ENCODE measurements at regions of chr21 and their contacts with region 1.

Region 1: GRCh38 chr21:35932232-35932911 is 128.0 kb downstream of the SETD4 start:
- DNase-seq: peak; percentile 91
- H3K4me3 ChIP-seq: peak overlapping the region; percentile 51
- H3K27ac ChIP-seq: peak overlapping the region; percentile 63
- H3K4me1 ChIP-seq: peaks cover 24% of the 10 kb centered on the region
- H3K27me3 ChIP-seq: no peaks in the 10 kb centered on the region

Region 2: GRCh38 chr21:34745557-34746255 is 1186.7 kb before region 1 on chr21:
- in situ Hi-C with region 1: loop called (anchors 25 kb)
- DNase-seq: peak; percentile 90
- H3K4me3 ChIP-seq: peak overlapping the region; percentile 36
- H3K27ac ChIP-seq: 0 out of 2 replicates have a peak overlapping the region, but pooled peaks have one; percentile 15
- H3K4me1 ChIP-seq: peaks cover 17% of the 10 kb centered on the region
- H3K27me3 ChIP-seq: no peaks in the 10 kb centered on the region

Region 3: DNA sequence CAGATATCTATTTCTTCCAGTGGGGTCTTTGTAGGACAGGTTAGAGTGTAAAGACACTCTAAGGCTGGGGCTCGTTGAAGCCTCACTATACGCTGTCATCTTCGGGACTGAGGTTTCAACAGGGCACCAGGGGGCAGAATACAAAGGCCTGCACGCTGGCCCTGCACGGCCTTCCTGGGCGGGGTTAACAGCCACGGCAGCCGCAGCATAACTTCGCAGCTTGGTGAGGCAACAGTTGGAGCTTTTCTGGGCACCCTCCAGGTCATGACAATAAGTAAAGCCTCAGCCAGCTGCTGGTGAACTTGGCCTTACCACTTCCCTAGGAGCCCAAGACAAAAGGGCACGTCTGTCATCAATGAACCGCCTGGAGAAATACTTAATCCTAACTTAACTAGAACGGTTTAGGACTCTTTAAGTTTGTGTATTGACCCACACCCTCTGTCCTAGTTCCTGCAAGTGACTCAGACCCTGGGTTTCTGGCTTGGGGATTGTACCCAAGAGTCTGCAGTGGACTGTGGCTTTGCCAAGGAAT is 881.0 kb before region 1 on chr21:
- in situ Hi-C with region 1: loop called (anchors 25 kb)
- DNase-seq: peak; percentile 97
- H3K4me3 ChIP-seq: 0 out of 2 replicates have a peak overlapping the region, but pooled peaks have one; percentile 26
- H3K27ac ChIP-seq: peak overlapping the region; percentile 84
- H3K4me1 ChIP-seq: peaks cover 50% of the 10 kb centered on the region
- H3K27me3 ChIP-seq: no peaks in the 10 kb centered on the region

Region 4: DNA sequence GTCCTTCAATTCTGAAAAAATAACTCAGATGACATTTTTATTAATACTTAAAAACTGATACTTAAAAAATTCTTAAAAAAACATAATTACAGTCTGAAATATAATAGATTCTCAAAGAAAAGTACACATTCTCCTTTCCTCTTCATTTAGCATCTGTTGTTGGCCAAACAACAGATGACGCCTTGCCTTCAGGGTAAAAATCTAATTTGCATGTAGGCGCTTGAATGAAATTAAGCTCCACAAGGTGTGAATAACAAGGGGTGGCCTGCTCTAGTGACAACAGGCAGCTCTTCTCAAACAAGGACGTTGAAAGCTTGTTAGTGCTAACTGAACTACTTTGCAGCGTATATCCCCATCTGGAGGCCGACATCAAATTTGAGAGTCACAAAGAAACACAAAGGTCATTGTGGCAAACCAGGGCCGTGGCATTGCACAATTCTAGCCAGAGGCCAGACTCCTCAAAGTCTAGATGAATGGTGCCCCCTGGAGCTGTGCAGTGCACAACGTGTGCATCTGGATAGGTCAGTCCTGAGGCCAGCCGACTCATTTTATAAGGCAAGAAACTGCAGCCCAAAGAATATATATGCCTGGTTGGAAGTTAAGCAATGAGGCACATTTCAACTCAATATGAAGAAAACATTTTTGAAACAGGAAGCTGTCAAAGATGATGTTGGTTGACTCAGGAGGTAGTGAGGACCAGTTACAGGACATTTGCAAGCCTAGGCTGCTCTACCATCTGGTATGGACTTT is 424.1 kb before region 1 on chr21:
- in situ Hi-C with region 1: no loop called
- DNase-seq: peak; percentile 83
- H3K4me3 ChIP-seq: no peak overlapping the region
- H3K27ac ChIP-seq: 0 out of 2 replicates have a peak overlapping the region, but pooled peaks have one; percentile 3
- H3K4me1 ChIP-seq: peaks cover 47% of the 10 kb centered on the region
- H3K27me3 ChIP-seq: no peaks in the 10 kb centered on the region